ENCODE measurements at regions of chr17 and their contacts with region 1.

Region 1: DNA sequence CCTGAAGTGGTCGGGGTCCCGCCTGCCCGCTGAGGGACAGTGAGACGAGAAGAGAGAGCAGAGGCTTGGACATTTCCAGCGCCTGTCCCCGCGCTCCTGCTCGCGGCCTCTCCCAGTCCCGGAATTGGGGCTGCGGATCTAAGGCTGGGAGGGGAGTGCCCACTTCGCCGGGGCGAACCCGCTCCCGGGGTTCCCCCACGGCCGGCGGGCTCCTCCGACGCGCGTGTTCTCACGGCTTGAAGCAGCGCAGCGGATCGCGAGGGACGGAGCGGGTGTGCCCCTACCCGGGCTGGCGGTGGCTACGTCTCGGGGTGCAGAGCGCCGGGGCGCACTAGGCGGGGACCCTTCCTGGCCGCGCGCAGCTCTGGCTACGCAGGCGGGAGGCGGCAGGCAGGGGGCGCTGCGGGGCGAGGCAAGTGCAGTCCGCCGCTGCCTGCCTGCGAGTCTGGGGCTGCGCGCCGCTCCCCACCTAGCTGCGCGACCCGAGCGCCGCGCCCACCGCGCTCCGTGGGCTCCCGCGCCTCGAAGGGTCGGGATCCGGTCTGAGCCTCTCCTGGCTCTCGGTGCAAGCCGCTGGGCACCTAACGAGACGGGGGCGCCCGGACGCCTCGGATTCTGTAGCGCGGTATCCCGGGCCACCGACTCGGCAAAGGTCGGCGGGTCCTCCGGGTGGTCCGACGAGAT is 1.2 kb downstream of the NGFR start:
- DNase-seq: peak; percentile 84 to 89
- ATAC-seq: peak; percentile 78 to 83 (median 80)
- H3K4me3 ChIP-seq: peak overlapping the region; percentile 51
- H3K4me3 Mint-ChIP-seq: peak overlapping the region; percentile 93
- H3K27ac ChIP-seq: no peak overlapping the region
- H3K27ac Mint-ChIP-seq: peak overlapping the region in 1 of 2 donors; percentile 85
- H3K4me1 ChIP-seq: peaks cover 36% of the 10 kb centered on the region
- H3K4me1 Mint-ChIP-seq: peaks cover 26 to 39% of the 10 kb centered on the region in 2 donors
- H3K27me3 ChIP-seq: peaks cover 42% of the 10 kb centered on the region
- H3K27me3 Mint-ChIP-seq: peaks cover 35 to 38% of the 10 kb centered on the region in 2 donors
- CTCF ChIP-seq: peak; percentile 91

Region 2: DNA sequence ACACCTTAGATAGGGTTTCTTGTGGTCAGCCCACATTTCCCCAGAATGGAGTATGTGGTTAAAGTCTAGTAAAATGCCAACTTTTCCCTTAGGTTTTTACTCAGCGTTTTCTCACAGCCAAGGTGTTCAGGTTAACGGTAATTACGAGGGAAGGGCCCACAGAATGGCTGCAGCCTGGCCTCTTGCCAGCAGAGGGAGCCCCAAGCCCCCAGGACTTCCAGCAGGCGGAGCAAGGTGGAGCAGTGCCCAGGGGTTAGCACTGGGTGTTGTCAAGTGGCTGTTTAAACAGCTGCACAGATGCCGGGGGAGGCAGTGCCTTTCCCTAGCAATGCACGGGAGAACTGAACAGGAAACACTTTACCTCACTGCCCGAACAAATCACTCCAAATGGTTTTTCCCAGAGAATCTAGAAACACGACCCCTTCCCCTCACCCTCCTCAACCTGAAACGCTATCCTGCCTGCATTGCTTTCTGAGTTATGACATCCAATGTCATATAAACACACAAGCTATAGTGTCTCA is 88.3 kb before region 1 on chr17:
- intact Hi-C with region 1: loop called (anchors 2 kb)
- DNase-seq: peak; percentile 83 to 90
- ATAC-seq: peak; percentile 79 to 91 (median 80)
- H3K4me3 ChIP-seq: no peak overlapping the region
- H3K4me3 Mint-ChIP-seq: peak overlapping the region; percentile 17
- H3K27ac ChIP-seq: peak overlapping the region; percentile 4
- H3K27ac Mint-ChIP-seq: peak overlapping the region; percentile 71 to 73
- H3K4me1 ChIP-seq: peaks cover 44% of the 10 kb centered on the region
- H3K4me1 Mint-ChIP-seq: peaks cover 33 to 47% of the 10 kb centered on the region in 2 donors
- H3K27me3 ChIP-seq: no peaks in the 10 kb centered on the region
- H3K27me3 Mint-ChIP-seq: no peaks in the 10 kb centered on the region
- CTCF ChIP-seq: peak; percentile 98

Region 3: GRCh38 chr17:49525831-49526741 is 29.8 kb after region 1 on chr17:
- intact Hi-C with region 1: no loop called
- DNase-seq: peak in 1 of 2 donors; percentile 7
- ATAC-seq: no peak
- H3K4me3 ChIP-seq: no peak overlapping the region
- H3K4me3 Mint-ChIP-seq: no peak overlapping the region
- H3K27ac ChIP-seq: no peak overlapping the region
- H3K27ac Mint-ChIP-seq: no peak overlapping the region
- H3K4me1 ChIP-seq: peaks cover 9% of the 10 kb centered on the region
- H3K4me1 Mint-ChIP-seq: no peaks in the 10 kb centered on the region
- H3K27me3 ChIP-seq: no peaks in the 10 kb centered on the region
- H3K27me3 Mint-ChIP-seq: peaks cover 0 to 12% of the 10 kb centered on the region in 2 donors
- CTCF ChIP-seq: no peak